SK-N-SH (cell line): ENCODE measurements at regions of chr20 and their contacts with region 1.

Region 1: DNA sequence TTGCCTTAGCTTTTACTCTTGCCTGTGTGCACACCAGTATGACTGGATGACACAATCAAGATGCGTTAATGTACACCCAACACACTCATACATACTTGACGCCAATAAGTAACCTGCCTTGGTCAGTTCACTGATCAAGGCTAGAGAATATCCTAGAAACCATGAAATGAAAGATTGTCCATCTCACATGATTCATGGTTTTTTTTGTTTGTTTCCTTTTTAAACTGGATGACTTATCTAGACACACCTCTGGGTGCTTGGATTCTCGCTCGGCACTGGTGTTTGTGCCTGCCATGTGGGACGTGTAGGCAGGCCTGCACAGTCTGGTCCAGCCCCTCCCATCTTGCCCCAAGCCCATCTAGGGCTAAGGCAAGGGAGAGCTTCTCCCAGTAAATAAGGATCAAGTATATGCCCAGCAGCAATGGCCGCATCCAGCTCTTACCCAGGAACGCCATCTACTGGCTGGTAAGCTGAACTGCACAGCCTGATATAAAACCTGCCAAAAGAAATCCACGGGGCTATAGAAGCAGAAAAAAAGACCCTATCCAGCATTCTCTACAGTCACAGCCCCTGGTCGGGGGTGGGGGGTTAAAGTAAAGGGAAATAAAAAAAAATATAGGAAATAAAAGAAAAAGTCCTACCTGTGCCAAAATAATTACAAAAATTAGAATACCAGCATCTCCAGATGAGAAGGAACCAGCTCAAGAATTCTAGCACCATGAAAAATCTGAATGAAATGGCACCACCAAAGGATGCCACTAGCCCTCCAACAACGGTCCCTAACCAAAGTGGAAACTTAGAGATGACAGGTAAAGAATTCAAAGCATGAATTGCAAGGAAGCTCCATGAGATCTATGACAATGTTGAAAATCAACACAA is 73.3 kb downstream of the OTOR start:
- DNase-seq: peak; percentile 47
- H3K4me3 ChIP-seq: peak overlapping the region in 1 of 2 experiments; percentile 51; a peak in 1 of 4 replicates
- H3K27ac ChIP-seq: no peak overlapping the region
- H3K4me1 ChIP-seq: no peaks in the 10 kb centered on the region
- H3K27me3 ChIP-seq: no peaks in the 10 kb centered on the region
- CTCF ChIP-seq: peak; percentile 88
- EP300 ChIP-seq: no peak
- RAD21 ChIP-seq: peak; percentile 75

Region 2: GRCh38 chr20:16810216-16810615 is 11.2 kb before region 1 on chr20:
- CTCF ChIA-PET with region 1: interaction called, 300 read pairs
- POLR2A ChIA-PET with region 1: no interaction called
- DNase-seq: no peak
- H3K4me3 ChIP-seq: no peak overlapping the region
- H3K27ac ChIP-seq: no peak overlapping the region
- H3K4me1 ChIP-seq: no peaks in the 10 kb centered on the region
- H3K27me3 ChIP-seq: no peaks in the 10 kb centered on the region
- CTCF ChIP-seq: no peak
- EP300 ChIP-seq: no peak
- RAD21 ChIP-seq: no peak

Region 3: DNA sequence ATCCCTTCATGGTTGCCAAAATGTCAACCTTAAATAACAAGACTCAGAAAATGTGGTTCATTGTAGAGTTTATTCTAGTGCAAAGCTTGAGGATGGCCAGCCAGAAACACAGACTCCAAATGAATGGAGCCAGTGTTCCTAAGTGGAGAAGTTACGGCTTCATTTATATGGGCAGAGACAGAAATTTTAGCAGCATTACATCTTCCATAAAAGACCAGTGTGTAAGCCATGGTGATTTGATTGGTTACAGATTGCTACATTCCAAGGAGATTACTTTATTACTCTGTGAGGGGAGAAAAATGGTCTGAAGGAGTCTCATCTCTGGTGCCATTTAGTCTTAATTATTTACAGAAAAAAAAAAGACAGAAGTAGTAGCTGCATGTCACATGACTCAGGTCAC is 24.6 kb after region 1 on chr20:
- CTCF ChIA-PET with region 1: interaction called, 10 read pairs
- POLR2A ChIA-PET with region 1: no interaction called
- DNase-seq: no peak
- H3K4me3 ChIP-seq: no peak overlapping the region
- H3K27ac ChIP-seq: peak overlapping the region in 1 of 2 experiments; percentile 54; a peak in 2 of 4 replicates
- H3K4me1 ChIP-seq: no peaks in the 10 kb centered on the region; a peak in 1 of 4 replicates
- H3K27me3 ChIP-seq: no peaks in the 10 kb centered on the region
- CTCF ChIP-seq: no peak
- EP300 ChIP-seq: no peak
- RAD21 ChIP-seq: no peak

Region 4: GRCh38 chr20:16966276-16966880 is 144.9 kb after region 1 on chr20:
- CTCF ChIA-PET with region 1: no interaction called
- POLR2A ChIA-PET with region 1: no interaction called
- DNase-seq: no peak
- H3K4me3 ChIP-seq: no peak overlapping the region
- H3K27ac ChIP-seq: no peak overlapping the region
- H3K4me1 ChIP-seq: no peaks in the 10 kb centered on the region
- H3K27me3 ChIP-seq: no peaks in the 10 kb centered on the region; the same call in 1 of the 2 replicates
- CTCF ChIP-seq: no peak
- EP300 ChIP-seq: no peak
- RAD21 ChIP-seq: no peak

Region 5: GRCh38 chr20:17197041-17197440 is 375.6 kb after region 1 on chr20:
- CTCF ChIA-PET with region 1: no interaction called
- POLR2A ChIA-PET with region 1: no interaction called
- DNase-seq: no peak
- H3K4me3 ChIP-seq: no peak overlapping the region
- H3K27ac ChIP-seq: no peak overlapping the region
- H3K4me1 ChIP-seq: no peaks in the 10 kb centered on the region
- H3K27me3 ChIP-seq: no peaks in the 10 kb centered on the region
- CTCF ChIP-seq: no peak
- EP300 ChIP-seq: no peak
- RAD21 ChIP-seq: no peak